HCT116 (cell line): ENCODE measurements at regions of chr7 and their contacts with region 1.

Region 1: DNA sequence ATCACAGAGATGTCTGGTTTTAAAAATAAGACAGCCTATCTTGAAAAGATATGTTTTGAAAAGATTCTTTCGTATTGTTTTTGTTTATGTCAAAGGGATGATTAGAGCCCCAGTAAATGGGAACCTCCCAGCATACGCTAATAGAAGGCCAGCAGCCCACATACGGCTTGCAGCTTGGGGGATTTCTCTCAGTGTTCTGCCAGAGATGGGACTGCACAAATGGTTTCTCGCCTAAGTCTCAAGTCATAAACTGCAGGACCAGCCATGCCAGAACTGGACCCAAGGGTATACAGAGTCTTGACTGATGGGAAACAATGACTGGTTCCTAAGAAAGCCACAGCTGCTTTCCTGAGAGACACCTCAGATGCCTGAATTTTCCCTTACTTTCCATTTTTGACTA is 306.9 kb upstream of the DGKB start:
- DNase-seq: no peak
- ATAC-seq: no peak
- H3K4me3 ChIP-seq: no peak overlapping the region
- H3K27ac ChIP-seq: no peak overlapping the region
- H3K4me1 ChIP-seq: peaks cover 0 to 13% of the 10 kb centered on the region in 2 experiments; a peak in 2 of 4 replicates
- H3K27me3 ChIP-seq: no peaks in the 10 kb centered on the region
- CTCF ChIP-seq: no peak
- POLR2A ChIP-seq: no peak
- RAD21 ChIP-seq: no peak

Region 2: GRCh38 chr7:14924398-14924797 is 285.0 kb before region 1 on chr7:
- CTCF ChIA-PET with region 1: no interaction called
- POLR2A ChIA-PET with region 1: no interaction called
- RAD21 ChIA-PET with region 1: no interaction called
- intact Hi-C with region 1: no loop called
- DNase-seq: no peak
- ATAC-seq: no peak
- H3K4me3 ChIP-seq: no peak overlapping the region
- H3K27ac ChIP-seq: no peak overlapping the region
- H3K4me1 ChIP-seq: no peaks in the 10 kb centered on the region
- H3K27me3 ChIP-seq: no peaks in the 10 kb centered on the region
- CTCF ChIP-seq: no peak
- POLR2A ChIP-seq: no peak
- RAD21 ChIP-seq: peak; percentile 37; the same call in 1 of the 2 replicates

Region 3: DNA sequence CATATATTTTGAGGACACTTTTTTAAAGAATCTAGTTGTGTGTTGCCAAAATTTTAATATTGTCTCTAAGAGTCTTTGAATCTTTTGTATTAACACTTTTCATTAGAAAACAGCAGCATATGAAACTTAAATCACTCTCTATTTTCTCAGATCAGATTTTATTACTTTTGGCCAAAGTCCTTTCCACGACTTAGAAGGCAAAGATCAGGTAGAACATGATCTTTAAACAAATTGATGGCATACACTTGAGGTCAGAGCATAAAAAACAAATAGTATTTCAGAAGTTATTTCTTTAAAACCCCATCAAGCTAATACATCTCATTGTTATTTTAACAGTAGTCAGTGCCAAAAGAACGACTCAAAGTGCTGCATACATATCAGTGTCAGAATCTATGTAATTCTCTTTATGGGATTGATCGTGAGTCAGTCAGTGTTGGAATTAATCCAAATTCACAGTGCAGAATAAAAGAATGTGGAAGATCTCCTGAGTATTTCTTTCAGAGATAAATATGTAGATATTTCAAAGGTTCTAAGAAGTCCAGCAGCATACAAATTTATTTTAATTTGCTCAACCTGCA is 362.0 kb after region 1 on chr7:
- CTCF ChIA-PET with region 1: no interaction called
- POLR2A ChIA-PET with region 1: no interaction called
- RAD21 ChIA-PET with region 1: no interaction called
- intact Hi-C with region 1: no loop called
- DNase-seq: no peak
- ATAC-seq: no peak
- H3K4me3 ChIP-seq: no peak overlapping the region
- H3K27ac ChIP-seq: no peak overlapping the region
- H3K4me1 ChIP-seq: no peaks in the 10 kb centered on the region
- H3K27me3 ChIP-seq: no peaks in the 10 kb centered on the region
- CTCF ChIP-seq: no peak
- POLR2A ChIP-seq: no peak
- RAD21 ChIP-seq: no peak

Region 4: GRCh38 chr7:16062269-16062668 is 852.8 kb after region 1 on chr7:
- CTCF ChIA-PET with region 1: no interaction called
- POLR2A ChIA-PET with region 1: no interaction called
- RAD21 ChIA-PET with region 1: no interaction called
- intact Hi-C with region 1: loop called (anchors 10 kb)
- DNase-seq: no peak
- ATAC-seq: no peak
- H3K4me3 ChIP-seq: no peak overlapping the region
- H3K27ac ChIP-seq: no peak overlapping the region
- H3K4me1 ChIP-seq: peaks cover 0 to 4% of the 10 kb centered on the region in 2 experiments; a peak in 2 of 4 replicates
- H3K27me3 ChIP-seq: no peaks in the 10 kb centered on the region
- CTCF ChIP-seq: no peak
- POLR2A ChIP-seq: no peak
- RAD21 ChIP-seq: no peak